Mammary epithelial cell (primary cell): ENCODE measurements at regions of chr4 and their contacts with region 1.

Region 1: GRCh38 chr4:147160908-147161513 is 215.3 kb upstream of the TTC29 start:
- DNase-seq: peak; percentile 49
- H3K4me3 ChIP-seq: no peak overlapping the region
- H3K27ac ChIP-seq: no peak overlapping the region
- H3K4me1 ChIP-seq: peaks cover 9% of the 10 kb centered on the region
- H3K27me3 ChIP-seq: no peaks in the 10 kb centered on the region
- CTCF ChIP-seq: peak; percentile 84 to 89

Region 2: DNA sequence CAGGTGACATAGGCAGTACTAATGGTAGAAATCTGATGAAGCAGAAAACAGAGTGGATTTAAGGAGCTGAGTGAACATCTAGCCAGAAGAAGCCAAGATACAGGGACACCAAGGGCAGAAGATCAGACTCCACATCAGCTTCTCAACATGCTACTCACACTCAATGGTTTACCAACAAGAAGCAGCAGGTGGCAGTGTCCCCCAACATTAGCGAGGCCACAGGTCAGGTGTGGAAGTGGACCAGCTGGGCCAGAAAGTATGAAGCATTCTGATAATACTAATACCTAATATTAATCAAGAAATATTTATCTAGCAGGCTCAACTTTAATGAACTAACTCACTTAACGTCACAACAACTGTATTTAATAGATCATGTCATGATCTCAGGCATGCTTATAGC is 141.9 kb before region 1 on chr4:
- CTCF ChIA-PET with region 1: interaction called, 33 read pairs
- dilution Hi-C with region 1: no loop called
- in situ Hi-C with region 1: no loop called
- intact Hi-C with region 1: no loop called
- DNase-seq: peak; percentile 42
- H3K4me3 ChIP-seq: no peak overlapping the region
- H3K27ac ChIP-seq: no peak overlapping the region
- H3K4me1 ChIP-seq: no peaks in the 10 kb centered on the region
- H3K27me3 ChIP-seq: peaks cover 3% of the 10 kb centered on the region
- CTCF ChIP-seq: peak; percentile 69 to 81

Region 3: GRCh38 chr4:147096667-147097604 is 64.1 kb before region 1 on chr4:
- CTCF ChIA-PET with region 1: no interaction called
- dilution Hi-C with region 1: no loop called
- in situ Hi-C with region 1: no loop called
- intact Hi-C with region 1: no loop called
- DNase-seq: peak; percentile 31
- H3K4me3 ChIP-seq: no peak overlapping the region
- H3K27ac ChIP-seq: no peak overlapping the region
- H3K4me1 ChIP-seq: peaks cover 2% of the 10 kb centered on the region
- H3K27me3 ChIP-seq: no peaks in the 10 kb centered on the region
- CTCF ChIP-seq: peak; percentile 58 to 59

Region 4: DNA sequence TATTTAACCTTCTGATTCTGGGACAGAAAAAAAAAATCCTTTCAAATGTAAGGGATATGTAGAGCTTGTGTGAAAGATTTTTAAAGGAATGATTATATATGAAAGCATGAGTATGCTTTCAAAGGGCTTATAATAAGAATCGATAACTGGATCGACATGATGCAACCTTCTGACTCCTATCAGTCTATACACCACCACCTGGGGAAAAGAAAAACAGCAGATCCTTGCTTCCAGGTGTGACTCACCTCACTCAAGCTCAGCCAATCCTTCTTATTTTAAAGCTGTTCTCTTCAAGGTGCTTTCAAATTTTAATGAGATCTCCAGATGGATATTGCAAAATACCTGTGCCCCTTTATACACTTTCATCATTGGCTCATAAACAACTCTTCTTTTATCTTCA is 217.8 kb after region 1 on chr4:
- CTCF ChIA-PET with region 1: interaction called, 3 read pairs
- dilution Hi-C with region 1: no loop called
- in situ Hi-C with region 1: loop called in 1 of 2 experiments (anchors 25 kb)
- intact Hi-C with region 1: loop called (anchors 1 kb)
- DNase-seq: peak; percentile 55
- H3K4me3 ChIP-seq: no peak overlapping the region
- H3K27ac ChIP-seq: no peak overlapping the region
- H3K4me1 ChIP-seq: peaks cover 3% of the 10 kb centered on the region
- H3K27me3 ChIP-seq: no peaks in the 10 kb centered on the region
- CTCF ChIP-seq: peak; percentile 18 to 46

Region 5: DNA sequence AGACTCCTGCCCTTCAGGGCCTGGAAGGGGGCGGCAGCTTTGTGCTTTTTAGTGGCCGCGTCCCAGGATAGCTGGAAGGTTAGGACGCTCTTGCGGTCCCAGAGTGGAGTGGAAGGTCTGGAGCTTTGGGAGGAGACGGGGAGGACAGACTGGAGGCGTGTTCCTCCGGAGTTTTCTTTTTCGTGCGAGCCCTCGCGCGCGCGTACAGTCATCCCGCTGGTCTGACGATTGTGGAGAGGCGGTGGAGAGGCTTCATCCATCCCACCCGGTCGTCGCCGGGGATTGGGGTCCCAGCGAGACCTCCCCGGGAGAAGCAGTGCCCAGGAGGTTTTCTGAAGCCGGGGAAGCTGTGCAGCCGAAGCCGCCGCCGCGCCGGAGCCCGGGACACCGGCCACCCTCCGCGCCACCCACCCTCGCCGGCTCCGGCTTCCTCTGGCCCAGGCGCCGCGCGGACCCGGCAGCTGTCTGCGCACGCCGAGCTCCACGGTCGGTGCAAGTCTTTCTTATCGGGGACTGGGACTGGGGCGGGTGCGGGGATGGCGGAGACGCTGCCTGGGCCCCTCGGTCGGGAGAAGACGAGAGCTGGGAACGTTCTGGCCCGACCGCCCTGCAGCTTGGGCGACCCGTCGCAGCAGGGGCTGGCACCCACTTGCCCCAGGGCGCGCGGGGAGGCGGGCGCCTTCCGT is 320.0 kb after region 1 on chr4 and contains the start of gene EDNRA:
- CTCF ChIA-PET with region 1: interaction called, 3 read pairs
- dilution Hi-C with region 1: no loop called
- in situ Hi-C with region 1: no loop called
- intact Hi-C with region 1: loop called (anchors 1 kb)
- DNase-seq: no peak
- H3K4me3 ChIP-seq: peak within 1 kb of the TSS; percentile 73 to 78 (median 77)
- H3K27ac ChIP-seq: peak within 1 kb of the TSS; percentile 10
- H3K4me1 ChIP-seq: peaks cover 33% of the 10 kb centered on the region
- H3K27me3 ChIP-seq: no peaks in the 10 kb centered on the region
- CTCF ChIP-seq: no peak
- total RNA-seq, gene EDNRA: 19.2 to 35.4 TPM

Region 6: GRCh38 chr4:147513952-147514351 is 352.9 kb after region 1 on chr4:
- CTCF ChIA-PET with region 1: interaction called, 14 read pairs
- dilution Hi-C with region 1: no loop called
- in situ Hi-C with region 1: no loop called
- intact Hi-C with region 1: loop called (anchors 1 kb)
- DNase-seq: no peak
- H3K4me3 ChIP-seq: no peak overlapping the region
- H3K27ac ChIP-seq: no peak overlapping the region
- H3K4me1 ChIP-seq: peaks cover 5% of the 10 kb centered on the region
- H3K27me3 ChIP-seq: no peaks in the 10 kb centered on the region
- CTCF ChIP-seq: peak; percentile 3 to 16

Region 7: GRCh38 chr4:147518846-147519767 is 358.1 kb after region 1 on chr4:
- CTCF ChIA-PET with region 1: interaction called, 14 read pairs
- dilution Hi-C with region 1: no loop called
- in situ Hi-C with region 1: no loop called
- intact Hi-C with region 1: loop called (anchors 1 kb)
- DNase-seq: peak; percentile 60
- H3K4me3 ChIP-seq: no peak overlapping the region
- H3K27ac ChIP-seq: no peak overlapping the region
- H3K4me1 ChIP-seq: peaks cover 5% of the 10 kb centered on the region
- H3K27me3 ChIP-seq: no peaks in the 10 kb centered on the region
- CTCF ChIP-seq: peak; percentile 96 to 97

Region 8: DNA sequence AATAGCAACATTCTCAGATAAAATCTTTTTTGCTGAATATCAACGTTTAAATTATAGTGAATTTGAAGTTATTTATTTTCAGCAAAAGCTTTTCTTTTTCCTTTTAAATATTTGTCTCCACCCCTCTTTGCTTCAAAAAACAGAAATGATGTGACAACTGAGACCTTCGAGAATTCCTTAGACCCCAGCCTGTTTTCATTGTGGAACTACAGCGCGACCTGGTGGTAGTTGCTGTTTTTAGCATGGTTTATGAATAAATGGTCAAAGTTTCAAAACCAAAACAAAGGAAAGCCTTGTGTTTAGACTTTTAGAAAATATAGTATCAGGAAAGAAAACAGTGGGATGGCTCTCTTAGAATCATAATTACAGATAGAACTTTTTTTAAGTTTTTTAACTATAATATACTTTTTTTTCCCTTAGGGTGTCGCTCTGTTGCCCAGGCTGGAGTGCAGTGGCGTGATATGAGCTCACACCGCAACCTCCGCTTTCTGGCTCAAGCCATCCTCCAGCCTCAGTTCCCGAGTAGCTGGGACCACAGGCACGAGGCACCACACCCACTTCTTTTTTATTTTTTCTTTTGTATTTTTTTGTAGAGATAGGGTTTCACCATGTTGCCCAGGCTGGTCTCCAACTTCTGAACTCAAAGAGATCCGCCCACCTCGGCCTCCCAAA is 429.4 kb after region 1 on chr4:
- CTCF ChIA-PET with region 1: interaction called, 8 read pairs
- dilution Hi-C with region 1: no loop called
- in situ Hi-C with region 1: loop called (anchors 10 to 25 kb)
- intact Hi-C with region 1: loop called (anchors 1 kb)
- DNase-seq: peak; percentile 34
- H3K4me3 ChIP-seq: peak overlapping the region in 2 of 3 experiments; percentile 6 to 27
- H3K27ac ChIP-seq: peak overlapping the region; percentile 29
- H3K4me1 ChIP-seq: no peaks in the 10 kb centered on the region
- H3K27me3 ChIP-seq: no peaks in the 10 kb centered on the region
- CTCF ChIP-seq: peak; percentile 75 to 80